ENCODE measurements at regions of chr17 and their contacts with region 1.

Region 1: GRCh38 chr17:46020023-46020761 is 21.1 kb downstream of the STH start:
- DNase-seq: peak; percentile 47
- H3K4me3 Mint-ChIP-seq: peak overlapping the region; percentile 27
- H3K27ac Mint-ChIP-seq: peak overlapping the region; percentile 84
- H3K4me1 Mint-ChIP-seq: peaks cover 13% of the 10 kb centered on the region
- H3K27me3 Mint-ChIP-seq: no peaks in the 10 kb centered on the region

Region 2: GRCh38 chr17:45573924-45574770 is 446.0 kb before region 1 on chr17:
- CTCF ChIA-PET with region 1: no interaction called
- intact Hi-C with region 1: no loop called
- DNase-seq: no peak
- H3K4me3 Mint-ChIP-seq: no peak overlapping the region
- H3K27ac Mint-ChIP-seq: no peak overlapping the region
- H3K4me1 Mint-ChIP-seq: peaks cover 44% of the 10 kb centered on the region
- H3K27me3 Mint-ChIP-seq: no peaks in the 10 kb centered on the region

Region 3: DNA sequence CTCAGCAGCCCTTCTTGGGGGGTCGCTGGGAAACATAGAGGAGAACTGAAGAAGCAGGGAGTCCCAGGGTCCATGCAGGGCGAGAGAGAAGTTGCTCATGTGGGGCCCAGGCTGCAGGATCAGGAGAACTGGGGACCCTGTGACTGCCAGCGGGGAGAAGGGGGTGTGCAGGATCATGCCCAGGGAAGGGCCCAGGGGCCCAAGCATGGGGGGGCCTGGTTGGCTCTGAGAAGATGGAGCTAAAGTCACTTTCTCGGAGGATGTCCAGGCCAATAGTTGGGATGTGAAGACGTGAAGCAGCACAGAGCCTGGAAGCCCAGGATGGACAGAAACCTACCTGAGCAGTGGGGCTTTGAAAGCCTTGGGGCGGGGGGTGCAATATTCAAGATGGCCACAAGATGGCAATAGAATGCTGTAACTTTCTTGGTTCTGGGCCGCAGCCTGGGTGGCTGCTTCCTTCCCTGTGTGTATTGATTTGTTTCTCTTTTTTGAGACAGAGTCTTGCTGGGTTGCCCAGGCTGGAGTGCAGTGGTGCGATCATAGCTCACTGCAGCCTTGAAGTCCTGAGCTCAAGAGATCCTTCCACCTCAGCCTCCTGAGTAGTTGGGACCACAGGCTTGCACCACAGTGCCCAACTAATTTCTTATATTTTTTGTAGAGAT is 17.8 kb before region 1 on chr17:
- CTCF ChIA-PET with region 1: interaction called, 12 read pairs
- intact Hi-C with region 1: no loop called
- DNase-seq: peak; percentile 82
- H3K4me3 Mint-ChIP-seq: no peak overlapping the region
- H3K27ac Mint-ChIP-seq: no peak overlapping the region
- H3K4me1 Mint-ChIP-seq: no peaks in the 10 kb centered on the region
- H3K27me3 Mint-ChIP-seq: no peaks in the 10 kb centered on the region